CD4-positive, alpha-beta T cell (primary cell): ENCODE measurements at regions of chrX and their contacts with region 1.

Region 1: DNA sequence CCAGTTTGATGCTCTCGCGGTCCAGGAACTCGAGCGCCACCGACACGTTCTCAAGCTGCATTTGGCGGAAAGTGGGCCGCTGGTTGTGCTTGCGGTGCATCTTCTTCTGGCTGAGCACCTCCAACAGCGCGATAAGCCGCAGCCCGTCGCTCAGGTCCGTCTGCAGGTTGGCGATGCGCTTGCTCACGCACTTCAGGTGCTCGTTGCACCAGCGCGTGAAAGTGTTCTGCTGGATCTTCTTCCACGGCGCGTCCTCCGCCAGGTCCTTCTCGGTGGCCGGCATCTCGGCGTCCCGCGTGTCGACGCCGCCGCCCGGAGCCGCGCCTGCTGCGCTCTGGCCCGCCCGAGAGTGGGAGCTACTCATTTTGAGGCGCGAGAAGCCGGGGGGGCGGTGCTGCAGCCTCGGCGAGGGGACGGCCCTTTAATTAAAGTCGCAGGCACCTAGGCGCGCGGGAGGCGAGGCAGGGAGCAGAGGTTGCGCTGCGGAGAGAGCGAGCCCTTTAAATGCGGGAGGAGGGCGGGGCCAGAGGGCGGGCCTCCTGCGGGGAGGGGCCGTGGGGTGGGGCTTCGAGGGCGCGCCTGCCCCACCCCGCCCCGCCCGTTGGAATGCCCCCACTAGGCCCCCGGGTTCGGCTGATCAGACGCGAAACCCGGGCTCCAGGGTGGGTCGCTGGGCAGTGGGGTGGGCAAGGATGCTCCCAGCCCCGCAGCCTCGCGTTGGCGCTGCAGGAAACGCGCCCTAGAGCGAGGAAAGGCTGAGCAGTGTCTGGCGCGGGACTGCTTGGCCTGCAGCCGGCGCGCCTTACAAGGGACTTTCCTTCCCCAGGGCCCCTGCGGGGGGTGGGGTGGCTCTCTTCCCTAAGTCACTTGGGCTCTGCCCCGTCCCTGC is 3.3 kb downstream of the FLNA start:
- DNase-seq: peak; percentile 84 to 96 (median 90)
- ATAC-seq: peak; percentile 65
- H3K4me3 ChIP-seq: peak overlapping the region; percentile 77
- H3K4me3 Mint-ChIP-seq: peak overlapping the region; percentile 96
- H3K27ac ChIP-seq: peak overlapping the region in 1 of 2 donors; percentile 96
- H3K27ac Mint-ChIP-seq: peak overlapping the region; percentile 80
- H3K4me1 ChIP-seq: peaks cover 59% of the 10 kb centered on the region
- H3K4me1 Mint-ChIP-seq: peaks cover 22% of the 10 kb centered on the region
- H3K27me3 ChIP-seq: no peaks in the 10 kb centered on the region
- H3K27me3 Mint-ChIP-seq: no peaks in the 10 kb centered on the region
- CTCF ChIP-seq: no peak

Region 2: GRCh38 chrX:153909024-153909970 is 461.8 kb before region 1 on chrX:
- CTCF ChIA-PET with region 1: no interaction called
- POLR2A ChIA-PET with region 1: no interaction called
- intact Hi-C with region 1: no loop called
- DNase-seq: peak in 1 of 14 experiments; percentile 7
- ATAC-seq: no peak
- H3K4me3 ChIP-seq: no peak overlapping the region
- H3K4me3 Mint-ChIP-seq: no peak overlapping the region
- H3K27ac ChIP-seq: no peak overlapping the region
- H3K27ac Mint-ChIP-seq: no peak overlapping the region
- H3K4me1 ChIP-seq: peaks cover 33% of the 10 kb centered on the region
- H3K4me1 Mint-ChIP-seq: peaks cover 23% of the 10 kb centered on the region
- H3K27me3 ChIP-seq: no peaks in the 10 kb centered on the region
- H3K27me3 Mint-ChIP-seq: no peaks in the 10 kb centered on the region
- CTCF ChIP-seq: no peak

Region 3: DNA sequence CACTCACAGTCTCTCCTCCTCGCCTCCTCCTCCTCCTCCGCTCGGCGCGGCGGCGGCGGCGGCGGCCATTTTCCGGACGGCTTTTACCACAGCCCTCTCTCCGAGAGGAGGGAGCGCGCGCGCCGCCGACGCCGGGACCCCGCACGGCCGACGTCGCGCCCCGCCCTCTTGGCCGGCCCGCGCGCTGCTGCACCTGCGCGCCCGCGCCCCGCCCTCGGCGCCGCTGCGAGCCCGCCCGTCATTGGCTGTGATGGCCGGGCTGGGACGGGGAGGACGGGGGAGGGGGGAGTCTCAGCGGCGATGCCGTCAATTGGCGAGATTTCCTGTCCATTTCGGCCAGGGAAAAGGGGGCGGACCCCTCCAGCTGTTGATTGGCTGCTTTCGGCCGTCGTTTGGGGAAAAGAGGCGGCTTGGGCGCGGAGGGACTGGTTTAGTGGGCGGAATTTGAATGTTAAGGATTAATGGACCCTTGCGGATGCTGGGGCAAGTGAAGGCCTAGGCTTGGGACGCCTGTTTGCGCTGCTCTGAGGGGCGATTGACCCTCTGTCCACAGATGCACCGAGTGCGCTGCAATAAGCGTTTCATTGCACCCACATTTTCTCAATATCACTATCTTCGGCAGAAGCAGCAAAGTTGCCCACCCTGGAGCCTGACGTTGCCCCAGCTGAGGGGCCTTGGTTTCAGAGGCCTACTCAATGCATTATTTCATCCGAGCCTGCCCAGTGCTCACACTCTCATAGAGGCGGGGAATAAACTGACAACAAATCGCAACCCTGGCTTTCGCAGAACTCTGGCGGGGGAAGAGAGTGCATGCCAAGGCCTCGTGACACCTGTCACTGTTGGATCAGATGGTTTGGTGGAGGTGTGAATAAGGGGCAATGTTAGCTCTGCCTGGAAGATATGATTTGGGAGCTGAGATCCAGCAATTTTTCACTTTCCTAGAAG is 273.3 kb before region 1 on chrX and contains the start of gene MECP2:
- CTCF ChIA-PET with region 1: no interaction called
- POLR2A ChIA-PET with region 1: no interaction called
- intact Hi-C with region 1: loop called in 1 of 2 experiments (anchors 5 kb)
- DNase-seq: peak; percentile 69 to 94 (median 82)
- ATAC-seq: peak; percentile 86
- H3K4me3 ChIP-seq: peak within 1 kb of the TSS; percentile 90
- H3K4me3 Mint-ChIP-seq: peak within 1 kb of the TSS; percentile 97
- H3K27ac ChIP-seq: peak within 1 kb of the TSS; percentile 80 to 86
- H3K27ac Mint-ChIP-seq: peak within 1 kb of the TSS; percentile 97
- H3K4me1 ChIP-seq: peaks cover 32% of the 10 kb centered on the region
- H3K4me1 Mint-ChIP-seq: peaks cover 39% of the 10 kb centered on the region
- H3K27me3 ChIP-seq: no peaks in the 10 kb centered on the region
- H3K27me3 Mint-ChIP-seq: no peaks in the 10 kb centered on the region
- CTCF ChIP-seq: no peak
- total RNA-seq, gene MECP2: 120 to 133 TPM

Region 4: DNA sequence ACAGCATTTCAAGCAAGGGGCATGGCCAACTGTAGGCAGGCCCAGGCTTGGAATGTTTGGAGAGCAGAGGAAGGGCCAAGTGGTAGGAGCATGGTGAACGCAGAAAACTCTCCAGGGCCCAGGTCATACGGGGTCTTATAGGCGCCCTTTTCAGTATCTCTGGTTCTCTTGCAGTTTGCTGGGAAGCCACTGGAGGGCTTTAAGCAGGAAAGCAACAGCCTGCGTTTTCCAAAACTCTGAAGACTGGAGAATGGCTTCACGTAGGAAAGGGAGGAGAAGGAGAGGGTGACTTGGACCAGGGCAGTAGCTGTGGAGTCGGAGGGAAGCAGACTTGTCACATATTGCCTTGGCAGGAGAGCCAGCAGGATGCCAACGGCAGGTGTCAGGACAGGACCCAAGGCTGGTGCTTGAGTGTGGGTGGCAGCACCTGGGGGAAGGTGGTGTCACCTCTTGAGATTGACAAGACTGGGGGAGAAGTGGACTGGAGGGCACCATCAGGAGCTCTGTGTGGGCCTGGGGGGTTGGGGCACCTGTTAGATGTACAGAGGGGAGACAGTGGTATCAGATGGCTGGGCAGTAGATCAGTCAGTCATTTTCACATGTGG is 53.6 kb before region 1 on chrX:
- CTCF ChIA-PET with region 1: no interaction called
- POLR2A ChIA-PET with region 1: no interaction called
- intact Hi-C with region 1: loop called in 1 of 2 experiments (anchors 2 kb)
- DNase-seq: peak in 5 of 14 experiments; percentile 12 to 51 (median 27)
- ATAC-seq: peak; percentile 55
- H3K4me3 ChIP-seq: no peak overlapping the region
- H3K4me3 Mint-ChIP-seq: peak overlapping the region; percentile 37
- H3K27ac ChIP-seq: no peak overlapping the region
- H3K27ac Mint-ChIP-seq: no peak overlapping the region
- H3K4me1 ChIP-seq: peaks cover 38% of the 10 kb centered on the region
- H3K4me1 Mint-ChIP-seq: peaks cover 38% of the 10 kb centered on the region
- H3K27me3 ChIP-seq: no peaks in the 10 kb centered on the region
- H3K27me3 Mint-ChIP-seq: no peaks in the 10 kb centered on the region
- CTCF ChIP-seq: peak; percentile 22

Region 5: DNA sequence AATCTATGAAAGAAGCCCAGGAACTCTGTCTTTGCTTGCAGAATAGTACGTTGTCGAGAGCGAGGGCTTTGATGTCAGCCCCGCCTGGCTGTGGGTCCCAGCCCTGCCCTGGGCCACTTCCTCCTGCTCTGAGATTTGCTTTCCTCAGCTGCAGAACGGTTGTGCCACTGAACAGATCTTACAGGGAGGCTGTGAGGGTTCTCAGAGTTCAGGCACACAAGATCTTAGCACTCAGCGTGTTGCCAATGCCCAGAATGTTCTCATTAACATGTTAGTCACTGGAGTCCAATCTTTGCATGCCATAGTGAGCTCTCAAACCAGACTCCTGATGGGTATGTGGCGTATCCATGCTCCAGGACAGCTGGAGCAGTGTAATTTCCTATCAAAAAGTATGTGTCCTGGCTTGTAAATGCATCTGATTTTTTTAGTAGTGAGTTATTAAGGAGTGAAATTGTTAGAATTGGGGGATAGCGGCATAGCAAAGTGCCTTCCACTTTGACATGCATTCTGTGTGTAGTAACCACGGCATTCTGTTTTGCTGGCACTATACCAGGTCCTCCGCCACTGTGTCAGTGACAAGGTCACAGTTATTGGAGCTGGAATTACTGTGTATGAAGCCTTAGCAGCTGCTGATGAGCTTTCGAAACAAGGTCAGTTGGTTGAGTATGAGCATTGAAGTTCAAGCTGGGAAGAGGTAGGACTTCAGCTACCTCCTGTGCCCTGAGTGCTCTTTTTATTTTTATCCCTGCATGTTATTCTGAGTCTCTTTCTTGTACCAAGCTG is 43.9 kb before region 1 on chrX:
- CTCF ChIA-PET with region 1: no interaction called
- POLR2A ChIA-PET with region 1: interaction called, 9 read pairs
- intact Hi-C with region 1: loop called in 1 of 2 experiments (anchors 5 kb)
- DNase-seq: peak in 13 of 14 experiments; percentile 31 to 72 (median 59)
- ATAC-seq: peak; percentile 96
- H3K4me3 ChIP-seq: peak overlapping the region; percentile 24
- H3K4me3 Mint-ChIP-seq: peak overlapping the region; percentile 84
- H3K27ac ChIP-seq: peak overlapping the region; percentile 27 to 52
- H3K27ac Mint-ChIP-seq: peak overlapping the region; percentile 87
- H3K4me1 ChIP-seq: peaks cover 49% of the 10 kb centered on the region
- H3K4me1 Mint-ChIP-seq: peaks cover 48% of the 10 kb centered on the region
- H3K27me3 ChIP-seq: no peaks in the 10 kb centered on the region
- H3K27me3 Mint-ChIP-seq: no peaks in the 10 kb centered on the region
- CTCF ChIP-seq: no peak